ENCODE measurements at regions of chr2 and their contacts with region 1.

Region 1: GRCh38 chr2:203697190-203697589 is 9.2 kb upstream of the CD28 start:
- DNase-seq: no peak

Region 2: DNA sequence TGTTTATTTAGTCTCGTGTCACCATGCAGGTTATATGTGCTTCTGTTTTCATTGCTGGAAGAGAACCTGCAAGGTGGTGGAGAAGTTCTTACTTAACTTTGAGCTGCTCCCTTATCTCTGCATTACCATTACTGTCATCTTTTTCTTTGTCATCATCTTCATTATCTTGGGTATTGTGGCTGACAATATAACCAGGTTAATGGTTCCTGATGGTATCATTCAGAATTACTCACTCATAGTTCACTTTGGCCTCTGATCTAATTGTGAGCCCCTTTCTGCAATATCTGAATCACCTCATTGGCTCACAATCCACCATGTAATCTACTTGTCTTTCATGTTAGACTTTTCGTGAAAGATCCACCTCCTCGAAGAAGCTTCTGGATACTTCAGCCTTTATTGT is 14.2 kb after region 1 on chr2:
- intact Hi-C with region 1: loop called (anchors 2 kb)
- DNase-seq: no peak

Measured in cardiac septum (tissue), 1 donor.